Naive thymus-derived CD8-positive, alpha-beta T cell (primary cell): ENCODE measurements at regions of chr10 and their contacts with region 1.

Region 1: GRCh38 chr10:27155066-27155754 is at the start of gene MASTL:
- DNase-seq: peak; percentile 93 to 98 (median 95)
- ATAC-seq: peak; percentile 79 to 80
- H3K4me3 Mint-ChIP-seq: peak within 1 kb of the TSS; percentile 92 to 100 (median 98)
- H3K27ac Mint-ChIP-seq: peak within 1 kb of the TSS; percentile 97 to 100 (median 100)
- H3K4me1 Mint-ChIP-seq: peaks cover 28 to 55% (median 51%) of the 10 kb centered on the region in 4 donors
- H3K27me3 Mint-ChIP-seq: peaks cover 0 to 4% (median 0%) of the 10 kb centered on the region in 5 donors
- polyA plus RNA-seq, gene MASTL: 1.3 to 2.1 (median 2.0) TPM

Region 2: DNA sequence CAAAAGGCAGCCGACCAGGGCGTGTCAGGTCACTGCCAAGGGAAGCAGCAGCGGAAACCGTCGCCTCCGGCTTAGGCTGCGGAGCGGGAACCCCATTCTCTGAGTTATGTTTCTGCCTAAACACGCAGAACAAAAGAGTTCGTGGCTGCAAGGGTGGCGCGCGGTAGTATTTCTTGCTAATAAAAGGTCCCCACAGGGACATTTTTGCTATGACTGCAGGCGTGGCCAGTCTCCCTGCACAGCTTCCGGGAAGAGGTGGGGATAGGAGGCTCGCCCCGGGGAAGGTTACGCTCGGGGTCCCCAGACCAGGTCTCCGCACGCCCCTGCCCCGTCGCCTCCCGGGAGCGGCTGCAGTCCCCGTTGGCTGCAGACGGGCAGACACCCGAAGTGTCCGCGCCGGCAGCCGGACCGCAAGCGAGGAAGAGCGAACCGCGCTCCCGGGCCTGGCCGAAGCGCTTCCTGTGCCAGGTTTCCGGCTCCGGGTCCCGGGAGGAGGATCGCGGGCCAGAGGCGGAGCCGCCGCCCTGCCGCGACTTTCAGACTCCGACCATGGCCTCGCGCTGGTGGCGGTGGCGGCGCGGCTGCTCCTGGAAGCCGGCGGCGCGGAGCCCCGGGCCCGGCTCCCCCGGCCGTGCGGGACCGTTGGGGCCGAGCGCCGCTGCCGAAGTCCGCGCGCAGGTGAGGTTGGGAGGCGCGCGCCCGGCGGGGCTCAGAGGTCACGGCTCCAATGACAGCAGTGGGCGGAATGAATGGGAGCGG is 457.9 kb before region 1 on chr10 and contains the start of gene PDSS1:
- POLR2A ChIA-PET with region 1: interaction called, 12 read pairs
- DNase-seq: peak; percentile 31 to 75 (median 52)
- ATAC-seq: peak; percentile 72 to 84
- H3K4me3 Mint-ChIP-seq: peak within 1 kb of the TSS; percentile 92 to 98 (median 94)
- H3K27ac Mint-ChIP-seq: peak within 1 kb of the TSS; percentile 94 to 99 (median 97)
- H3K4me1 Mint-ChIP-seq: peaks cover 17 to 41% (median 39%) of the 10 kb centered on the region in 4 donors
- H3K27me3 Mint-ChIP-seq: no peaks in the 10 kb centered on the region
- polyA plus RNA-seq, gene PDSS1: 2.9 to 3.9 (median 3.8) TPM

Region 3: GRCh38 chr10:27099916-27100812 is 55.0 kb before region 1 on chr10 and contains the start of gene ANKRD26:
- POLR2A ChIA-PET with region 1: interaction called, 32 read pairs
- DNase-seq: peak; percentile 92 to 98 (median 96)
- ATAC-seq: peak; percentile 50 to 71
- H3K4me3 Mint-ChIP-seq: peak within 1 kb of the TSS; percentile 88 to 97 (median 95)
- H3K27ac Mint-ChIP-seq: peak within 1 kb of the TSS; percentile 96 to 100 (median 98)
- H3K4me1 Mint-ChIP-seq: peaks cover 26 to 55% (median 54%) of the 10 kb centered on the region in 4 donors
- H3K27me3 Mint-ChIP-seq: peaks cover 0 to 5% (median 0%) of the 10 kb centered on the region in 5 donors
- polyA plus RNA-seq, gene ANKRD26: 1.9 to 2.9 (median 2.7) TPM

Region 4: GRCh38 chr10:27169849-27170248 is 14.6 kb after region 1 on chr10:
- POLR2A ChIA-PET with region 1: no interaction called
- DNase-seq: no peak
- ATAC-seq: no peak
- H3K4me3 Mint-ChIP-seq: no peak overlapping the region
- H3K27ac Mint-ChIP-seq: no peak overlapping the region
- H3K4me1 Mint-ChIP-seq: no peaks in the 10 kb centered on the region
- H3K27me3 Mint-ChIP-seq: no peaks in the 10 kb centered on the region

Region 5: GRCh38 chr10:27241652-27242472 is 86.7 kb after region 1 on chr10:
- POLR2A ChIA-PET with region 1: interaction called, 41 read pairs
- DNase-seq: peak; percentile 75 to 91 (median 84)
- ATAC-seq: peak; percentile 57 to 64
- H3K4me3 Mint-ChIP-seq: peak overlapping the region; percentile 81 to 99 (median 98)
- H3K27ac Mint-ChIP-seq: peak overlapping the region; percentile 95 to 100 (median 99)
- H3K4me1 Mint-ChIP-seq: peaks cover 19 to 48% (median 34%) of the 10 kb centered on the region in 4 donors
- H3K27me3 Mint-ChIP-seq: no peaks in the 10 kb centered on the region

Region 6: DNA sequence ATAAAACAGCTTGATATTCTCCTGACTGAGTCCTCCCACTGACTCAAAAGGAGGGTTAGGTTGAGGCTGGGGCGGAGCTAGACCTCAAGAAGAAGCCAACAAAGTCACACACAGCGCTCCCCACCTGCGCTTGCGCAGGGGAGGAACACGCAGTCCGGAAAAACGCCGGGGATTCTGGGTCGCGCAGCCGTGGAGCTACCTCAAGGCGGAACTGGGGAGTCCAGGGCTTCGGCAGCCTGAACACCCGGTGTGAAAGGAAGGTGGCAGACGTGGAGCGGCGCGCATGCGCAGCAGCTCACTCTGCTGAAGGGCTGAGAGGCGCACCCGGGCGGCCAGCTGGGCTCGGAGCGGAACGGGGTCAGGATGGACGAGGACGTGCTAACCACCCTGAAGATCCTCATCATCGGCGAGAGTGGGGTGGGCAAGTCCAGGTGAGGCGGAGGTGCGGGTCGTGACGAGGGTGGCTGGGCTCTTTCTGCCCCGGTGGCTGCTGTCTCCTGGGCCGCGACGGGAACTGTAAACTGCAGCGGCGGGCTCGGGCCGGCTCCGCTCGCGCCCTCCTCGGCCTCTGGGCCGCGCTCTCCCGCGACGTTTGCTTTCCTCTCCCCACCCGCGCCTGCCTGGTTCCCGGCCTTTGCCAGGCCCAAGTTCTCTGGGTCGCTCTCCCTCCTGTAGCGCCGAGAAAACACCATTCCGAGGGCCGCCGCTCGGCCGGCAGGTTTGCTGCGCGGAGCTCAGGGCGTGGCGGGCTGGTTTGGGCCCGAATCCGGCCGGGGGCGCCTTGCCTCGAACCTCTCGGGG is 349.0 kb after region 1 on chr10 and contains the start of gene RAB18:
- POLR2A ChIA-PET with region 1: interaction called, 17 read pairs
- DNase-seq: peak; percentile 94 to 100 (median 98)
- ATAC-seq: peak; percentile 94
- H3K4me3 Mint-ChIP-seq: peak within 1 kb of the TSS; percentile 96 to 100 (median 99)
- H3K27ac Mint-ChIP-seq: peak within 1 kb of the TSS; percentile 96 to 100 (median 99)
- H3K4me1 Mint-ChIP-seq: peaks cover 23 to 53% (median 51%) of the 10 kb centered on the region in 4 donors
- H3K27me3 Mint-ChIP-seq: peaks cover 0 to 3% (median 0%) of the 10 kb centered on the region in 5 donors
- polyA plus RNA-seq, gene RAB18: 65.4 to 82.4 (median 76.3) TPM

Region 7: GRCh38 chr10:28315140-28315539 is 1159.9 kb after region 1 on chr10:
- POLR2A ChIA-PET with region 1: interaction called, 11 read pairs
- DNase-seq: no peak
- ATAC-seq: no peak
- H3K4me3 Mint-ChIP-seq: peak overlapping the region in 1 of 10 donors; percentile 19
- H3K27ac Mint-ChIP-seq: peak overlapping the region in 2 of 10 donors; percentile 67 to 74
- H3K4me1 Mint-ChIP-seq: peaks cover 9 to 52% (median 33%) of the 10 kb centered on the region in 4 donors
- H3K27me3 Mint-ChIP-seq: peaks cover 0 to 2% (median 0%) of the 10 kb centered on the region in 5 donors